HepG2 (cell line): ENCODE measurements at regions of chr11 and their contacts with region 1.

Region 1: GRCh38 chr11:118497831-118498230 is 29.4 kb upstream of the TTC36 start:
- DNase-seq: no peak
- ATAC-seq: no peak
- H3K4me3 ChIP-seq: no peak overlapping the region
- H3K27ac ChIP-seq: no peak overlapping the region
- H3K4me1 ChIP-seq: no peaks in the 10 kb centered on the region
- H3K27me3 ChIP-seq: no peaks in the 10 kb centered on the region
- CTCF ChIP-seq: no peak
- EP300 ChIP-seq: no peak
- POLR2A ChIP-seq: no peak
- RAD21 ChIP-seq: no peak

Region 2: GRCh38 chr11:117979481-117980211 is 518.2 kb before region 1 on chr11:
- CTCF ChIA-PET with region 1: no interaction called
- POLR2A ChIA-PET with region 1: no interaction called
- in situ Hi-C with region 1: no loop called
- intact Hi-C with region 1: no loop called
- DNase-seq: no peak
- ATAC-seq: no peak
- H3K4me3 ChIP-seq: no peak overlapping the region
- H3K27ac ChIP-seq: no peak overlapping the region
- H3K4me1 ChIP-seq: no peaks in the 10 kb centered on the region
- H3K27me3 ChIP-seq: peaks cover 0 to 45% of the 10 kb centered on the region in 2 experiments; a peak in 4 of 5 replicates
- CTCF ChIP-seq: no peak
- EP300 ChIP-seq: no peak
- POLR2A ChIP-seq: no peak
- RAD21 ChIP-seq: no peak

Region 3: GRCh38 chr11:118380571-118380970 is 117.3 kb before region 1 on chr11:
- CTCF ChIA-PET with region 1: no interaction called
- POLR2A ChIA-PET with region 1: no interaction called
- in situ Hi-C with region 1: loop called (anchors 10 kb)
- intact Hi-C with region 1: no loop called
- DNase-seq: no peak
- ATAC-seq: no peak
- H3K4me3 ChIP-seq: no peak overlapping the region
- H3K27ac ChIP-seq: no peak overlapping the region
- H3K4me1 ChIP-seq: no peaks in the 10 kb centered on the region
- H3K27me3 ChIP-seq: no peaks in the 10 kb centered on the region
- CTCF ChIP-seq: no peak
- EP300 ChIP-seq: no peak
- POLR2A ChIP-seq: no peak
- RAD21 ChIP-seq: no peak